Natural killer cell (primary cell): ENCODE measurements at regions of chr6 and their contacts with region 1.

Region 1: GRCh38 chr6:63683071-63683603 is 47.5 kb downstream of the PHF3 start:
- DNase-seq: no peak
- ATAC-seq: no peak
- H3K4me3 ChIP-seq: no peak overlapping the region
- H3K4me3 Mint-ChIP-seq: no peak overlapping the region
- H3K27ac ChIP-seq: no peak overlapping the region
- H3K27ac Mint-ChIP-seq: no peak overlapping the region
- H3K4me1 ChIP-seq: no peaks in the 10 kb centered on the region
- H3K4me1 Mint-ChIP-seq: peaks cover 50 to 53% of the 10 kb centered on the region in 2 donors
- H3K27me3 ChIP-seq: no peaks in the 10 kb centered on the region
- H3K27me3 Mint-ChIP-seq: no peaks in the 10 kb centered on the region
- CTCF ChIP-seq: no peak

Region 2: GRCh38 chr6:63635588-63636517 is 47.3 kb before region 1 on chr6 and contains the start of gene PHF3:
- intact Hi-C with region 1: loop called (anchors 5 kb)
- DNase-seq: peak; percentile 85 to 98
- ATAC-seq: peak; percentile 86 to 94 (median 86)
- H3K4me3 ChIP-seq: peak within 1 kb of the TSS; percentile 100
- H3K4me3 Mint-ChIP-seq: peak within 1 kb of the TSS; percentile 99
- H3K27ac ChIP-seq: peak within 1 kb of the TSS; percentile 98
- H3K27ac Mint-ChIP-seq: peak within 1 kb of the TSS; percentile 96 to 98
- H3K4me1 ChIP-seq: peaks cover 7% of the 10 kb centered on the region
- H3K4me1 Mint-ChIP-seq: peaks cover 49 to 55% of the 10 kb centered on the region in 2 donors
- H3K27me3 ChIP-seq: no peaks in the 10 kb centered on the region
- H3K27me3 Mint-ChIP-seq: peaks cover 4 to 7% of the 10 kb centered on the region in 2 donors
- CTCF ChIP-seq: no peak
- total RNA-seq, gene PHF3: 80.2 to 84.4 (median 84.0) TPM

Region 3: DNA sequence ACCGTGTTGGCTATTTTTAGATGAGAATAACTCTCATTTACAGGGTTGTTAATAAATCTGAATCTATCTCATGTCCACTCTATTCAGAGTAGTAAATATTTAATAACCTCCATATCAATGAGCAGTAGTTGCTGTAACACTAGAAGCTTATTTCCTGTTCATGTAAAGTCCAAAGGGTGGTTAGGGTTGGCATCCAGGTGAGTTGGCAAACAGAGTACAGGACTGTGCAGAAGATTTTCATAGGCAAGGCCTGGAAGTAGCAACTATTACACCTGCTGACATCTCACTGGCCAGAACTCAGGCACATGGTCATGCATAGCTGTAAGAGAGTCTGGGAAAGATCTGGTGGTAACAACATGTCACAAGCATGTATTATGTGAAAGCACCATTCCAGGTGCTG is 100.0 kb after region 1 on chr6:
- intact Hi-C with region 1: no loop called
- DNase-seq: no peak
- ATAC-seq: no peak
- H3K4me3 ChIP-seq: no peak overlapping the region
- H3K4me3 Mint-ChIP-seq: no peak overlapping the region
- H3K27ac ChIP-seq: no peak overlapping the region
- H3K27ac Mint-ChIP-seq: no peak overlapping the region
- H3K4me1 ChIP-seq: no peaks in the 10 kb centered on the region
- H3K4me1 Mint-ChIP-seq: no peaks in the 10 kb centered on the region
- H3K27me3 ChIP-seq: no peaks in the 10 kb centered on the region
- H3K27me3 Mint-ChIP-seq: peaks cover 0 to 7% of the 10 kb centered on the region in 2 donors
- CTCF ChIP-seq: no peak